Mammary epithelial cell (primary cell): ENCODE measurements at regions of chr20 and their contacts with region 1.

Region 1: DNA sequence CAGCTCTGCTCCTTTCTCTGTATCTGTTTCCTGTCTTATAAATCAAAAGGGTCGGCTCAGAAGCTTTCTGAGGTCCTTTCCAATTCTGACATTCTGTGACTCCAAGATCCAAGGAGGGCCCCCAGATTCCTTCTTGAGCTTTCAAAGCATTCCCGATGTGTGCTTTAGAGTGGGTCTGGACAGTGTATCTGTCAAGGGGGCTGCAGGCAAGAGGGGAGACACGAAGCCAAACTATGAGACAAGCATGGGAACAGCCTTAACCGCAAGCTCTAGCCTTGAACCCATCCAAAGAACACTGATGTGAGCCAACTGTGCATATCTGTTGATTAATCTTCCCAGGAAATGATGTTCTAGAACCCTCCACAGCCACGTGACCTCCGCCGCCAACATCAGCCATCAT is 73.8 kb downstream of the TSHZ2 start:
- DNase-seq: no peak
- H3K4me3 ChIP-seq: no peak overlapping the region
- H3K27ac ChIP-seq: no peak overlapping the region
- H3K4me1 ChIP-seq: peaks cover 10% of the 10 kb centered on the region
- H3K27me3 ChIP-seq: no peaks in the 10 kb centered on the region
- CTCF ChIP-seq: no peak

Region 2: DNA sequence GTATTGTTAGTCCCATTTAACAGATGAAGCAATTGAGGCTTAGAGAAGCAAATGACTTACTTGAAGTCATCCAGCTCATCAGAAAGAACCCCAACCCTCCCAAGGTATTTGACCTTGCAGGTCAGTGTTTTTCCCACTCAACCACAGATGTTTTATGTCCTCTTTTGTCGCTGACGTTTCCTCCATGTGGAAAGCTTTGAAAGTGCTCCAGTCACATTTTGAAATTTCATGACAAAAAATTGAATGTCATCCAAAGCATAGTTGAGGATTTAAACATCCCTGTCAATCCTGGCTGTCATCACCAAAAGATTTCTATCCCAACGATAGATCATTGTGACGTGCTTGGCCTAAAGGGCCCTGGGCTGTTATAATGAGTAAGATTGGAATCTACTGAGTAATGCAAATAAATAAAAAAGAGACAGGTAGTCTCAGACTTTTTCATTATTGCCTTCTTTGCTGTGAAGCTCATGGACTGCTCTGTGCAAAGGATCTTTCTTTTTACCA is 28.9 kb after region 1 on chr20:
- CTCF ChIA-PET with region 1: no interaction called
- dilution Hi-C with region 1: no loop called
- in situ Hi-C with region 1: no loop called
- intact Hi-C with region 1: no loop called
- DNase-seq: peak; percentile 32
- H3K4me3 ChIP-seq: no peak overlapping the region
- H3K27ac ChIP-seq: no peak overlapping the region
- H3K4me1 ChIP-seq: peaks cover 19% of the 10 kb centered on the region
- H3K27me3 ChIP-seq: no peaks in the 10 kb centered on the region
- CTCF ChIP-seq: no peak

Region 3: DNA sequence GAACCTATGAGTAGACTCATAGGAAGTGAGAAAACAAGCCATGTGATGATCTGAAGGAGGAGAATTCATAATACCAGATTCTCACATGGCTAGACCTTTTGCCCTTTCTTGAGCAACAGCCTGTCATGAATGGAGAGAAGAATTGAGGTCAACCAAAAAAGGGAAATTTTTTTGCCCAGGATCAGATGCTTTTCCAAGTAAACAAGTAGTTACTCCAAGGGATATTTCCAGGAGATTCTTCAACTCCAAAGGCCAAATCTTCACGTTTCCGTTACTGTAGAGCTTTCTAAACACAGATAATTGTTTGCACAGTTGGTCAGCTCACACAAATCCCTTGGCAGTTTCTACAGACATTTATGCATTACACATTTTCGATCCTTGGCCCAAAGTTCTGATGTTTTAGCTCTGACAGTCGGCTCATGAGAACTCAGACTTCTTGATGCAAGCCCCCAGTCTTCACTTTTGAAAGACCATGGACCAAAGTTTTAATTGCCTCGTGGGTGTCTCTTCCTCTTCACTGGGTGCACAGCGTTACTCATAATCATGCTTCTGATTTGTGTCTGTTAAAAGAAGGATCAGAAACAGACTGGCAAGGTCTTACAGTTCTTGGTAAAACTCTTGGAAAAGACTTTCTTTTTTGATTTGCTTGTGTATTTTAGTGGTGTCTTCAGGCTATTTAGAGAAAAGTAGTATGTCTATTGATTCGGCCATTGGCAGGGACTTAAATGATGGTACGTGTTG is 41.3 kb after region 1 on chr20:
- CTCF ChIA-PET with region 1: no interaction called
- dilution Hi-C with region 1: loop called (anchors 5 kb)
- in situ Hi-C with region 1: no loop called
- intact Hi-C with region 1: no loop called
- DNase-seq: no peak
- H3K4me3 ChIP-seq: no peak overlapping the region
- H3K27ac ChIP-seq: no peak overlapping the region
- H3K4me1 ChIP-seq: peaks cover 3% of the 10 kb centered on the region
- H3K27me3 ChIP-seq: no peaks in the 10 kb centered on the region
- CTCF ChIP-seq: no peak